Activated CD4-positive, alpha-beta T cell treated with anti-CD3 and anti-CD28 coated beads, Interleukin-2, amount 10 ng/mL, durations not matched to agents 7 days and 5 days (primary cell): ENCODE measurements at regions of chr6 and their contacts with region 1.

Region 1: DNA sequence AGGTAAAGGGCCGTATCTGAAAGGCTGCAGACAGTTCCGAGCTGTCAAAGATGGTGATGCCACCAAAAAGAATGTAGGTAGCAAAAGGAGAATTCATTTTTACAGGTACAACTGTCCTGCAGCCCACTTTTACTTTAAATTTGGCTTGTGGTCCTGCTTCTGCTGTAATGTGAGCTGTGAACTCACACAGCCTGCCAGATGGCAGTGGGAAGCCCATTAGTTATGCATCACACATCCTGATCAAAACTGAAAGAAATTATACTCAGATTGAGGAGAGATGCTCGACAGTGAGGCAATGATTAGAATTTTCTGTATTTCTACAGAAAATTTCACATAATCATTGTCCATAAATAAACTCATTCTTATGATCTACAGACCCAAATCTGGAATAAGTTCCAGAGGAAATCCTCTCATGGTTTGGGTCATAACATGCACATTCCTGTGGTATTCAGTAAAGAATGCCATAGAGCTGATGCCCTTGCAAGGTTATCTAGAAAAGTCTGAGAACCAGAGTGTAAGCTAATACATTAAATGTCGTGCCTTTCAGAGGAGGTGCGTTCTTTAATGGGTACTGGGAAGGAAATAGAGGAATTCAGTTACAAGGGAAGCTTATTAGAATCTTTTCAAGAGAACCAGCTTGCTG is 23.9 kb upstream of the E2F3 start:
- DNase-seq: no peak
- H3K4me3 Mint-ChIP-seq: no peak overlapping the region
- H3K27ac Mint-ChIP-seq: no peak overlapping the region
- H3K4me1 Mint-ChIP-seq: peaks cover 25% of the 10 kb centered on the region
- H3K27me3 Mint-ChIP-seq: no peaks in the 10 kb centered on the region

Region 2: DNA sequence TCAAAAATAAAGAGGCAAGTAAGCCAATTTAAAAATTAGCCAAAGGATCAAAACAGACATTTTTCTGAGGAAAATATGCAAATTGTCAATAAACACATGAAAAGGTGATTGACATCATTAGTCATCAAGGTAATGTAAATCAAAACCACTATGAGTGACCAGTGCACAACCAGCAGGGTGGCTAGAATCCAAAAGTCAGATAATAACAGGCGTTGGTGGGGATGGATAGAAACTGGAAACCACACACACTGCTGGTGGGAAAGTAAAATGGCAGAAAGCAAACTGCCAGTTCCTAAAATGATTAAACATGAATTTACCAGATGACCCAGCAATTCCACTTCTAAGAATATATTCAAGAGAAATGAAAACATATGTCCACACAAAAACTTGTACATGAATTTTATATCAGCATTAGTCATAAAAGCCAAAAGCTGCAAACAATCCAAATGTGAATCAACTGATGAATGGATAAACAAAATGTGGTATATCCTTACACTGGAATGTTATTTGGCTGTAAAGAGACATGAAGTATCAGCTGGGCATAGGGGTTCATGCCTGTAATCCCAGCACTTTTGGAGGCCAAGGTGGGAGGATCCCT is 90.7 kb before region 1 on chr6:
- CTCF ChIA-PET with region 1: no interaction called
- POLR2A ChIA-PET with region 1: no interaction called
- DNase-seq: no peak
- H3K4me3 Mint-ChIP-seq: no peak overlapping the region
- H3K27ac Mint-ChIP-seq: no peak overlapping the region
- H3K4me1 Mint-ChIP-seq: peaks cover 6% of the 10 kb centered on the region
- H3K27me3 Mint-ChIP-seq: peaks cover 34% of the 10 kb centered on the region

Region 3: GRCh38 chr6:20366091-20366832 is 11.5 kb before region 1 on chr6:
- CTCF ChIA-PET with region 1: interaction called, 15 read pairs
- POLR2A ChIA-PET with region 1: interaction called, 4 read pairs
- DNase-seq: peak; percentile 71
- H3K4me3 Mint-ChIP-seq: peak overlapping the region; percentile 68
- H3K27ac Mint-ChIP-seq: peak overlapping the region; percentile 99
- H3K4me1 Mint-ChIP-seq: peaks cover 60% of the 10 kb centered on the region
- H3K27me3 Mint-ChIP-seq: peaks cover 2% of the 10 kb centered on the region